Activated CD8-positive, alpha-beta T cell treated with anti-CD3 and anti-CD28 coated beads, Interleukin-2, amount 10 ng/mL, durations not matched to agents 7 days and 5 days (primary cell): ENCODE measurements at regions of chr6 and their contacts with region 1.

Region 1: GRCh38 chr6:134938896-134939295 is 11.0 kb downstream of the ALDH8A1 start:
- DNase-seq: peak; percentile 40
- ATAC-seq: peak; percentile 84
- H3K4me3 Mint-ChIP-seq: no peak overlapping the region
- H3K27ac Mint-ChIP-seq: no peak overlapping the region
- H3K4me1 Mint-ChIP-seq: peaks cover 7% of the 10 kb centered on the region
- H3K27me3 Mint-ChIP-seq: no peaks in the 10 kb centered on the region

Region 2: DNA sequence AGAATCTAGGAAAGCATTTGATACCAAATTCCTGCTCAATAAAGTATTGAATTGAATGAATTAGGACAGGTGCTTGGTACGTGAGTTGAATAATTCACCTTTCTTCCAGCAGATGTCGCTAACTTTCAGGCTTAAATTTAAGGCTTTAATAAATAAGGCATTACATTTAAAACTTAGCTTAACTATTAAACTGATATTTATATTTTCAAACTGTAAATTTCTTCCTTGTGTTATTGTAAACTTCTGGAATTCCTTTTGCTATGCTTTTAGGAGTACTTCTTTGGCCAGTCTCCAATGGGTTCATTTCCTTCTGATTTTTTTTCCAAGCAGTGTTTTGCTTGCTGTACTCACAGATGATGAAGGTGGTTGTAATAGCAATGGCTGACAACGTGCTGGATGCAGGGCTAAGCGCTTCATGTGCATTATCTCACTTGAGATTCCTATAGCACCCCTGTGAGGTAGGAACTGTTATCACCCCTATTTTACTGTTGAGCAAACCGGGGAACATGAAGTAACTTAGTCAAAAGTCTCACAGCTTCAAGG is 815.2 kb before region 1 on chr6:
- CTCF ChIA-PET with region 1: interaction called, 25 read pairs
- POLR2A ChIA-PET with region 1: no interaction called
- DNase-seq: peak; percentile 31
- ATAC-seq: peak; percentile 47
- H3K4me3 Mint-ChIP-seq: no peak overlapping the region
- H3K27ac Mint-ChIP-seq: no peak overlapping the region
- H3K4me1 Mint-ChIP-seq: no peaks in the 10 kb centered on the region
- H3K27me3 Mint-ChIP-seq: peaks cover 2% of the 10 kb centered on the region

Region 3: GRCh38 chr6:134152767-134153485 is 786.0 kb before region 1 on chr6:
- CTCF ChIA-PET with region 1: interaction called, 45 read pairs
- POLR2A ChIA-PET with region 1: no interaction called
- DNase-seq: no peak
- ATAC-seq: no peak
- H3K4me3 Mint-ChIP-seq: no peak overlapping the region
- H3K27ac Mint-ChIP-seq: no peak overlapping the region
- H3K4me1 Mint-ChIP-seq: no peaks in the 10 kb centered on the region
- H3K27me3 Mint-ChIP-seq: no peaks in the 10 kb centered on the region

Region 4: DNA sequence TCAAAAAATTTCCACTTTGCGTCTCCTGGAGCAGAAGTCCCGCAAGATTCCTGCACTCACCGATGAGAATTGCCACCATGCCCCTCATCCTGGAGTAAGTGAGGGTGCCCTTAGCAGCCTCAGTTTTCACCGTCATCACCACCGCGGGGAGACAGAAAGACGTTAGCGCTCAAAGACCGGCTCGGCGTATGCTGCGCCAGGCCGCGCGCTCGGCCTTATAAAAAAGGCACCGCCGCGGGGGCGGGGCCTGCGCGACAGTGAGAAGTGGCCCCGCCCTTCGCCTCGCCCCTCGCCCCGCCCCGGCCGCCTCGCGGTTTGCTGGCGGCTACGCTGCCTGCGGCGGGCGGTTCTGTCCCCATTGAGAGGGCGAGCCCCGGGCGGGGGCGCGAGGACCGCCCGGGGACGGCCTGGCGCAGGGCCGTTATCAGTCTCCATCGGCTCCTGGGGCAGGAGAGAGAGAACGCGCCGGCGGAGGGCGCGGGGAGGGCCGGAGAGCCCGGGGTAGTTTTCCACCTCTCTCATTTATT is 764.2 kb before region 1 on chr6:
- CTCF ChIA-PET with region 1: interaction called, 24 read pairs
- POLR2A ChIA-PET with region 1: interaction called, 3 read pairs
- DNase-seq: peak; percentile 92
- ATAC-seq: peak; percentile 77
- H3K4me3 Mint-ChIP-seq: peak overlapping the region; percentile 99
- H3K27ac Mint-ChIP-seq: peak overlapping the region; percentile 99
- H3K4me1 Mint-ChIP-seq: peaks cover 71% of the 10 kb centered on the region
- H3K27me3 Mint-ChIP-seq: no peaks in the 10 kb centered on the region

Region 5: GRCh38 chr6:134822920-134823709 is 115.8 kb before region 1 on chr6:
- CTCF ChIA-PET with region 1: interaction called, 16 read pairs
- POLR2A ChIA-PET with region 1: no interaction called
- DNase-seq: peak; percentile 45
- ATAC-seq: peak; percentile 90
- H3K4me3 Mint-ChIP-seq: no peak overlapping the region
- H3K27ac Mint-ChIP-seq: no peak overlapping the region
- H3K4me1 Mint-ChIP-seq: no peaks in the 10 kb centered on the region
- H3K27me3 Mint-ChIP-seq: peaks cover 6% of the 10 kb centered on the region

Region 6: DNA sequence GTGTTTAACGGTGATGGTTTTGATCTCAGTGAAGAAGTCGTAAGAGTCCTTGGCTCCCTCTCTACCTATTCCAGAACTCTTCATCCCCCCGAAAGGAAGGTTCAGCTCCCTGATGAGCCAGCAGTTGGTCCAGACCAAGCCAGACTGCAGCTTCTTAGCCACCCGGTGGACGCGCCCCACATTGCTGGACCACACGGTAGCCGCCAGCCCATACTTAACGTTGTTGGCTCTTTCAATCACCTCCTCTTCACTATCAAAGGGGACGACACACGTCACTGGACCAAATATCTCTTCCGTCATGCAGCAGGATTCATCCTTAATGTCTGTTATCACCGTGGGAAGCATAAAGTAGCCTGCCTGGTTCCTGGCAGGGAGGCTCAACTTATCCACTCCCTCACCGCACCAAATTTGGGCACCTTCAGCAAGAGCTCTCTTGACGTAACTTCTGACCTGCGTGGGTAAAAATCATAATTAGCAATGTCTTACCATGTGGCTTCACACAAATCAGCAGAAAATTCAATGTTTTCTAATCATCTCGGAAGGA is 20.4 kb before region 1 on chr6:
- CTCF ChIA-PET with region 1: interaction called, 11 read pairs
- POLR2A ChIA-PET with region 1: no interaction called
- DNase-seq: no peak
- ATAC-seq: no peak
- H3K4me3 Mint-ChIP-seq: no peak overlapping the region
- H3K27ac Mint-ChIP-seq: no peak overlapping the region
- H3K4me1 Mint-ChIP-seq: no peaks in the 10 kb centered on the region
- H3K27me3 Mint-ChIP-seq: no peaks in the 10 kb centered on the region

Region 7: GRCh38 chr6:134967711-134968110 is 28.8 kb after region 1 on chr6:
- CTCF ChIA-PET with region 1: interaction called, 11 read pairs
- POLR2A ChIA-PET with region 1: no interaction called
- DNase-seq: no peak
- ATAC-seq: no peak
- H3K4me3 Mint-ChIP-seq: no peak overlapping the region
- H3K27ac Mint-ChIP-seq: no peak overlapping the region
- H3K4me1 Mint-ChIP-seq: no peaks in the 10 kb centered on the region
- H3K27me3 Mint-ChIP-seq: no peaks in the 10 kb centered on the region